CD8-positive, alpha-beta T cell (primary cell): ENCODE measurements at regions of chr6 and their contacts with region 1.

Region 1: GRCh38 chr6:148831064-148831463 is 84.2 kb downstream of the UST start:
- DNase-seq: peak in 8 of 9 experiments; percentile 9 to 74 (median 36)
- ATAC-seq: peak; percentile 84
- H3K4me3 ChIP-seq: peak overlapping the region in 1 of 2 experiments; percentile 42
- H3K4me3 Mint-ChIP-seq: peak overlapping the region; percentile 82
- H3K27ac ChIP-seq: peak overlapping the region in 1 of 2 experiments; percentile 37
- H3K27ac Mint-ChIP-seq: peak overlapping the region; percentile 45
- H3K4me1 ChIP-seq: peaks cover 5% of the 10 kb centered on the region
- H3K4me1 Mint-ChIP-seq: peaks cover 29% of the 10 kb centered on the region
- H3K27me3 ChIP-seq: no peaks in the 10 kb centered on the region
- H3K27me3 Mint-ChIP-seq: no peaks in the 10 kb centered on the region
- CTCF ChIP-seq: no peak

Region 2: GRCh38 chr6:148720406-148720805 is 110.7 kb before region 1 on chr6:
- CTCF ChIA-PET with region 1: no interaction called
- POLR2A ChIA-PET with region 1: no interaction called
- intact Hi-C with region 1: no loop called
- DNase-seq: no peak
- ATAC-seq: no peak
- H3K4me3 ChIP-seq: no peak overlapping the region
- H3K4me3 Mint-ChIP-seq: no peak overlapping the region
- H3K27ac ChIP-seq: no peak overlapping the region
- H3K27ac Mint-ChIP-seq: no peak overlapping the region
- H3K4me1 ChIP-seq: no peaks in the 10 kb centered on the region
- H3K4me1 Mint-ChIP-seq: no peaks in the 10 kb centered on the region
- H3K27me3 ChIP-seq: no peaks in the 10 kb centered on the region
- H3K27me3 Mint-ChIP-seq: peaks cover 11% of the 10 kb centered on the region
- CTCF ChIP-seq: no peak

Region 3: DNA sequence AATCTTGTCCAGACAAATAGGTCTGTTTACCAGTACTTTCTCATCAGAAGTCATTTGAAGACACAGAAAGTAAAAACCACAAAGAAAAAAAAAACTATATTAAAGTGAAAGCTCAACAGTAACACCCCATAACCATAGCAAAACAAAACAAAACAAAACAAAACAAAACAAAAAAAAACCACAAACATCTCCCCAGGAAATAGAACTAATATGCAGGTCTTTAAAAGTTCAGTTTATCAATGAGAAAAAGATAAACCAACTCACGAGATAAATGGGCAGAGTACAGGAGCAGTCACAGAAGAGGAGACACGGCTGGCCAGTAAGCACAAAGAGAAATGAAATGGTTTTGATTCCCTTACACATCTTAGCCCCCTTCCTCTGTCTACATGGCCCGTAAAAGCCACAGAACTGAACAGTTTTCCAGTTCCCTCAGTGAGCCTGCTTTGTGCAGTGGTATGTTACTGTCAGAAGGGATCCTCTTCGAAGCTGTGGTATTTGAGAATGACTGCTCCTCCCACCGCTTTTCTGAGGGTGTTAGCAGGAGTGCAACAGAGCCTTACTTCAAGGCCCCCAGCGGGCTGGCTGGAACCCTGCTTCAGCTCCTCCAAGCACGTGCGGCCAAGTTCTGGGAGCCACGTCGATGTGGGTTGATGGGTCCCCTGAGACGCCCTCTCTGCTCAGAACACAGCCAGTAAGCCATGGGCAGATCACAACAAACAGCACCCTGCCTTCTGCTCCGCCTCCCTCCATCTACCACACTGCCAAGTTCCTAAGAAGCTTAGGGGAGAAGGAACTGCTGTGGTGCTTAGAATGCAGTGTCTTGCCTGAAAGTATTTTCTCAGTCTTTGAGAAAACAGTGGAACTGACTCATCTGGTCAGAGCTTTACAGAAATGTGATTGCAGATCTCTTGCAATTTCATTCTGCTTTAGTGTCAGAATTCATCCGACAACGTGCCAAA is 70.2 kb before region 1 on chr6:
- CTCF ChIA-PET with region 1: no interaction called
- POLR2A ChIA-PET with region 1: no interaction called
- intact Hi-C with region 1: loop called in 1 of 2 experiments (anchors 5 kb)
- DNase-seq: peak; percentile 24 to 86 (median 52)
- ATAC-seq: peak; percentile 58
- H3K4me3 ChIP-seq: peak overlapping the region; percentile 33 to 44
- H3K4me3 Mint-ChIP-seq: peak overlapping the region; percentile 71
- H3K27ac ChIP-seq: peak overlapping the region; percentile 60 to 93
- H3K27ac Mint-ChIP-seq: peak overlapping the region; percentile 95
- H3K4me1 ChIP-seq: peaks cover 44% of the 10 kb centered on the region
- H3K4me1 Mint-ChIP-seq: peaks cover 63% of the 10 kb centered on the region
- H3K27me3 ChIP-seq: no peaks in the 10 kb centered on the region
- H3K27me3 Mint-ChIP-seq: no peaks in the 10 kb centered on the region
- CTCF ChIP-seq: no peak